Activated CD4-positive, alpha-beta memory T cell treated with anti-CD3 and anti-CD28 coated beads for 36 hours (primary cell): ENCODE measurements at regions of chr7 and their contacts with region 1.

Region 1: DNA sequence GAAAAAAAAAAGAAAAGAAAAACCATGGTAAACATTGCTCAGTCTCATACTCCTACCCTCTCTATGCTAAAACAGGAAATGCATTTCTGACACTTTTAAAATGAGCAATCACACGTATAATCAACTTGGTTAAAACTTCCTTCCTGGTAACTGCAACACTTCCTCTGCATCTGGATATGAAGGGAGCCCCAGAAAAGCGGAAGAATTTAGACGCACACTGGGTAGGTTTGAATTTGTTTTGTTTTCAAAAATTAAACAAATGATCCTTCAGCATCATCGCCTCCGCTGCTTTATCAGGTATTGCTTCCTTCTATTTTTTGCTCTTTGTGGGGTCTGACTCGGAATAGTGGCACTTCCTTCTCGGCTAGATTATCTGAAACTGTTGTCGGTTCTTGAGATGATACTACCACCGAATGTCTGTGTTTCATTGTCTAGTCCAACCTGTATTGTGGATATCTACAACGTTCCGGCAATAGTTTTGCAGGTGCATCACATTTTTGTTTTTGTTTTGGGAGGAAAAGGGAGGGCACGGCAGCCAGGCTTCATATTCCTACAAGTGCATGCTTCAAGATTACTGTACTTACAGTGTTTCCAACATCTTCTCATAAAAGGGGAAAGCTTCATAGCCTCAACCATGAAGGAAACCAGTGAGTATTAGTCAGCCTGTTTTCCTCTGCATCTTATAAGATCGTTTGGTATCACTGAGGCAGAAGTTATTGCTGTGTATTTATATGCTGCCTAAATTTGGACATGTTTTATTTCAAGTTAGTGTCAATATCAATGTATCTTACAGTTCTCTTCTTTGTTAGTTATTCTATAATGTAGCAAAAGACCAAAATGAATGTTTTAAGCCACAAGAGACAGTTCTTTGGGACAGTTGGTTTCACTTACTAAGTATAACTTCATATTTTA is at the start of gene PIK3CG:
- DNase-seq: no peak
- H3K4me3 Mint-ChIP-seq: peak within 1 kb of the TSS; percentile 83
- H3K27ac Mint-ChIP-seq: peak within 1 kb of the TSS; percentile 79
- H3K4me1 Mint-ChIP-seq: peaks cover 73% of the 10 kb centered on the region
- H3K27me3 Mint-ChIP-seq: no peaks in the 10 kb centered on the region
- total RNA-seq, gene PIK3CG: 10.9 to 11.3 TPM

Region 2: GRCh38 chr7:106425017-106425719 is 440.2 kb before region 1 on chr7:
- CTCF ChIA-PET with region 1: no interaction called
- POLR2A ChIA-PET with region 1: no interaction called
- intact Hi-C with region 1: loop called (anchors 5 kb)
- DNase-seq: peak; percentile 91
- H3K4me3 Mint-ChIP-seq: peak overlapping the region; percentile 65
- H3K27ac Mint-ChIP-seq: peak overlapping the region; percentile 97
- H3K4me1 Mint-ChIP-seq: peaks cover 81% of the 10 kb centered on the region
- H3K27me3 Mint-ChIP-seq: no peaks in the 10 kb centered on the region

Region 3: DNA sequence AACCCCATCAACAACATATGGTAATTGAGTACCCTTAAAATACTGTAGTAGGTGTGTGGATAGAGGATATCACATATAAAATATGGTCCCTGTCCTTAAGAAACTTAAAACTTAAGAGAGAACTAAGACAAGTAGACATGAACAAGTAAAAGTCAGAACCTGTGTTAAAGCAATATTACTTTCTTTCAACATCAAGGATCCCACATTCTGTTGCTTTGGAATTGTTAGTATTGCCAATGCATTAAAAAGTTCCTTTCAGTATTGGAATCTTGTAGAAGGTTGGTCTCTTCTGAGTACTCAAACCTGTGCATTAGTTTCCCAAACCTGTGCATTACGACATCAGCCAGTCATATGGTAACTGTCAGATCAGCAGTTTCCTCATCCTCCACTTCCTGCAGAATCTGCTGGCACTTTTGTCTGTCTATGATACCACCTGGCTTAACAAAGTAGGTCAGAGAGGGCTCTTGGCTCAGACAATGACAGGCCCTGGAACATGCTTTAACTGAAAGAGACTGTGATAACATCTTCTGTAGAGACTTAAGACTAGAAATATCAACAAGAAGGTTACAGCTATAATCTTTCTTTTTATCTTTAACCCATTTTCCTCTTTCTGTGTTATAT is 261.0 kb before region 1 on chr7:
- CTCF ChIA-PET with region 1: no interaction called
- POLR2A ChIA-PET with region 1: no interaction called
- intact Hi-C with region 1: loop called (anchors 5 kb)
- DNase-seq: peak; percentile 68
- H3K4me3 Mint-ChIP-seq: no peak overlapping the region
- H3K27ac Mint-ChIP-seq: no peak overlapping the region
- H3K4me1 Mint-ChIP-seq: peaks cover 15% of the 10 kb centered on the region
- H3K27me3 Mint-ChIP-seq: no peaks in the 10 kb centered on the region

Region 4: GRCh38 chr7:106887421-106887820 is 22.0 kb after region 1 on chr7:
- CTCF ChIA-PET with region 1: no interaction called
- POLR2A ChIA-PET with region 1: no interaction called
- intact Hi-C with region 1: loop called (anchors 1 kb)
- DNase-seq: no peak
- H3K4me3 Mint-ChIP-seq: no peak overlapping the region
- H3K27ac Mint-ChIP-seq: peak overlapping the region; percentile 18
- H3K4me1 Mint-ChIP-seq: peaks cover 19% of the 10 kb centered on the region
- H3K27me3 Mint-ChIP-seq: no peaks in the 10 kb centered on the region

Region 5: DNA sequence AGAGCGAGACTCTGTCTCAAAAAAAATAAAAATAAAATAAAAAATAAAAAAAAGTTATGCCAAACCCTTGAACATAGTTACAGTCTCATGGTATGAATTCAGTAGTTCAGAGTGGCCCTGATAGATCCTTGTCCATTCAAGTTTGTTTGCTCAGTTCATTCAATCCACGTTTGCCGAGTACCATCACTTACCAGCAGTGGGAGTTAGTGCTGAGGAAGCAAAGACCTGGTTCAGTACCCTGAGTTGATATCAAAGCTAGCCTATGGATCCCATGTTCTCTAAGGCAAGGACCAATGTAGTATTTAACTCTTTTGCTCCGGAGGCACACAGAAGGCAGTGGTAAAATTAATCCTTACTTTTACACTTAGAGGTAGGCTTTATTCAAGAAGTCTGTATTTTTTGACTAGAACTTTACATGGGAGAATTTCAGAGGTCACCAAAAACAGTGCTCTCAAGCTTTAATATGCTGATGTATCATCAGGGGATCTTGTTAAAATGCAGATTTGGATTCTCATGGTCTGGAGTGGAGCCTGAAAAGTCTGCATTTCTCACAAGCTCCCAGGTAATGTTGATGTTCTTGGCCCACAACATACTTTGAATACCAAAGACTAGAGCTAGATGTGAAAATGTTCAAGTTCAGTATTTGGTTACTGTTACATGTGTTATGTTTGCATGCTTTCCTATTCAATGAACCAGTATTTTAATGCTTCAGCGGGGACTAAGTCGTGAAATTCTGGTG is 265.3 kb after region 1 on chr7:
- CTCF ChIA-PET with region 1: no interaction called
- POLR2A ChIA-PET with region 1: no interaction called
- intact Hi-C with region 1: loop called (anchors 2 kb)
- DNase-seq: no peak
- H3K4me3 Mint-ChIP-seq: no peak overlapping the region
- H3K27ac Mint-ChIP-seq: no peak overlapping the region
- H3K4me1 Mint-ChIP-seq: peaks cover 9% of the 10 kb centered on the region
- H3K27me3 Mint-ChIP-seq: no peaks in the 10 kb centered on the region

Region 6: DNA sequence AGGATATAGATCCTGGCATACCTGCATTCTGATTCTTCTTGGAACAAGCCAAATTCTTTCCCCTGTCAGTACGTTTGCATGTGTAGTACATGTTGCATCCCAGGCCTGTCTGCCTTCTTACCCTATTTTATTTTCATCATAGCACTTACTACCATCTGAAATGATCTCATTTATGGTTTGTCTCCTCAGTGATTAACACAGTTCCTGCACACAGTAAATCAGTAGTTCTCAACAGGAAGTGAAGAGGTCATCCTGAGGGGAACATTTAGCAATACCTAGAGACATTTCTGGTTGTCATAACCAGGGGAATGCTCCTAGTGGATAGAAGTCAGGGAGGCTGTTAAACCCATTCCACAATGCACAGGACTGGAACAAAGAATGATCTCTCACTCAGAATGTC is 757.0 kb after region 1 on chr7:
- CTCF ChIA-PET with region 1: no interaction called
- POLR2A ChIA-PET with region 1: no interaction called
- intact Hi-C with region 1: no loop called
- DNase-seq: no peak
- H3K4me3 Mint-ChIP-seq: no peak overlapping the region
- H3K27ac Mint-ChIP-seq: no peak overlapping the region
- H3K4me1 Mint-ChIP-seq: no peaks in the 10 kb centered on the region
- H3K27me3 Mint-ChIP-seq: no peaks in the 10 kb centered on the region